IMR-90 (cell line): ENCODE measurements at regions of chr19 and their contacts with region 1.

Region 1: DNA sequence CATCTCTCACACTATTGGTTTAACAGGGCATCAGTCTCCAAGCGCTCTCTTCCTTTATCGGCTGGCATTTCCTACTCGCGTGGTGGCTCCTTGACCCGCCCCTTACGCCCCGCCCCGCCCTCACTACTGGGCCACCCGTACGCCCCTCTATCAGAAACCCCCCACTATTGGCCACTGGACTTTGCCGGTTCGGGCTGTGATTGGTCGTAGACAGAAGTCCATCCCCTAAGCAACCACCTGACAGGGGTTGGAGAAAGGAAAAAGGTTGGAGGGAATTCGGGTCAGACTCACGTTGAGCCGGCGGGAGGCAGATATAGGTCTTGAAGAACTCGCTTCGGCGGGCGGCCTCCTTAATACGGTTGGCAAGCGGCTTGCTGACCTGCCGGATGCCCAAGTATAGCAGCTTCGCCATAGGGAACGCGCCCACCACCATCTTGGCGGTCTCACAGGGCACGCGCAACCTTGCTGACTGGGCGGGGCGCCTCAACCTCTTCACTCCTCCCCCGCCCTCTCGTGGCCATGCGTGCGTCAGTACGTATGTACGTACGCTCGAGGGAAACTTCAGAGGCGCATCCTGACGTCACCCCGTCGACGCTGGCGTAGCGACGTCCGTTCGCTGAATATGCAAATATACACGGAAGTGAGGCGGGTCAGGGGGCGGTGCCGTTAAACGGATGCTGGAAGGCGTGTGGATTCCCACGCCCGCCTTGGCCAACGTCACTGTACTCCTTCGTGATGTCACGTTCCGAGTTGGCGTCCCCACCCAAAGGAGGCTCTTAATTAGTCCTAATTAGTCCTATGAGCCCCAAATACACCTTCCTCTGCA is at the start of gene OPA3:
- DNase-seq: peak; percentile 100
- ATAC-seq: peak; percentile 96
- H3K4me3 ChIP-seq: peak within 1 kb of the TSS; percentile 81
- H3K27ac ChIP-seq: peak within 1 kb of the TSS; percentile 92
- H3K4me1 ChIP-seq: 0 out of 2 replicates have a peak, but pooled peaks cover 1% of the 10 kb centered on the region
- H3K27me3 ChIP-seq: no peaks in the 10 kb centered on the region
- CTCF ChIP-seq: no peak
- POLR2A ChIP-seq: peak; percentile 97
- RAD21 ChIP-seq: no peak; the same call in 1 of the 2 replicates
- total RNA-seq, gene OPA3: 3.9 and 5.2 TPM in 2 replicates

Region 2: GRCh38 chr19:45595814-45596213 is 11.3 kb after region 1 on chr19:
- CTCF ChIA-PET with region 1: no interaction called
- POLR2A ChIA-PET with region 1: interaction called, 13 read pairs
- dilution Hi-C with region 1: no loop called
- in situ Hi-C with region 1: no loop called
- intact Hi-C with region 1: no loop called
- DNase-seq: peak; percentile 43
- ATAC-seq: no peak
- H3K4me3 ChIP-seq: no peak overlapping the region
- H3K27ac ChIP-seq: no peak overlapping the region
- H3K4me1 ChIP-seq: no peaks in the 10 kb centered on the region
- H3K27me3 ChIP-seq: peaks cover 42% of the 10 kb centered on the region
- CTCF ChIP-seq: no peak
- POLR2A ChIP-seq: no peak
- RAD21 ChIP-seq: no peak

Region 3: DNA sequence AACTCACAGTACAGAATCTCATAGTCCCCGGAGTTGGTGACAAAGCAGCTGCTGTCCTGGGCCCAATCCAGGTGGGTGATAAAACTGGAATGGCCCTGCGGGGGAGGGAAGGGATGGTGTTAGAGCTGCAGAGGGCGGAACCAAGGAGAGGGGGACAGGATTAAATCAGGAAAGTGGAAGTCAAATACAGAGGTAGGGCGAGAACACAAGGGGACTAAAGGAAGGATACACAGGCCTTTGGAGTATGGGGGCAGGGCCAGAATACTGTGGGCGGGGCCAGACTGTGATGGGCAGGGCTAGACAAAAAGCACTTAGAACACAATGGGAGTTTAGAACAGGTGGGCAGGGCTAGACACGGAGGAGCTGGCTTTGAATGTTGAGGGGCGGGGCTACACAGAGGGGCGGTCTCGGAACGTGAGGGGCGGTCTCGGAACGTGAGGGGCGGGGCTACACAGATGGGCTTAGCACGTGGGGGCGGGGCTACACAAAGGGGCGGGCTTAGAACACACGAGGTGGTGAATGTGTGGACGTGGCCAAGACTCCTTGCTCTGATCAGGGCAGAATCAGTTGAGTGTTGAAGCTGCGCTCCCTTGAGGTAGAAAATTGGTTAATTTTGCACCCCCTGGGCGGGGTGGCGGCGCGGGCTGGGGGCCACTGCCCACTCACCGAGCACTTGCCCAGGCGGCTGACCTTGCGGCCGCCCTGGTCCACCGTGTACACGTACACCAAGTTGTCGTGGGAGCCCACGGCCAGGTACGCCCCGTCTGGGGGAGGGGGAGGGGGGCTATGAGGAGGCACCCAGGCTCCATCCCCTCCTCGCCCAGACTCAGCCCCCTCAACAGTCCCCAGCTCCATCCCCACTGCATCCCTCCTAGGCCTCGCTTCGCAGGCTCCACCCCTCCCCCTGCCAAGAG is 31.5 kb after region 1 on chr19:
- CTCF ChIA-PET with region 1: no interaction called
- POLR2A ChIA-PET with region 1: no interaction called
- dilution Hi-C with region 1: no loop called
- in situ Hi-C with region 1: no loop called
- intact Hi-C with region 1: no loop called
- DNase-seq: peak; percentile 80
- ATAC-seq: peak; percentile 87
- H3K4me3 ChIP-seq: no peak overlapping the region
- H3K27ac ChIP-seq: no peak overlapping the region
- H3K4me1 ChIP-seq: peaks cover 8% of the 10 kb centered on the region
- H3K27me3 ChIP-seq: no peaks in the 10 kb centered on the region
- CTCF ChIP-seq: no peak
- POLR2A ChIP-seq: no peak
- RAD21 ChIP-seq: no peak

Region 4: DNA sequence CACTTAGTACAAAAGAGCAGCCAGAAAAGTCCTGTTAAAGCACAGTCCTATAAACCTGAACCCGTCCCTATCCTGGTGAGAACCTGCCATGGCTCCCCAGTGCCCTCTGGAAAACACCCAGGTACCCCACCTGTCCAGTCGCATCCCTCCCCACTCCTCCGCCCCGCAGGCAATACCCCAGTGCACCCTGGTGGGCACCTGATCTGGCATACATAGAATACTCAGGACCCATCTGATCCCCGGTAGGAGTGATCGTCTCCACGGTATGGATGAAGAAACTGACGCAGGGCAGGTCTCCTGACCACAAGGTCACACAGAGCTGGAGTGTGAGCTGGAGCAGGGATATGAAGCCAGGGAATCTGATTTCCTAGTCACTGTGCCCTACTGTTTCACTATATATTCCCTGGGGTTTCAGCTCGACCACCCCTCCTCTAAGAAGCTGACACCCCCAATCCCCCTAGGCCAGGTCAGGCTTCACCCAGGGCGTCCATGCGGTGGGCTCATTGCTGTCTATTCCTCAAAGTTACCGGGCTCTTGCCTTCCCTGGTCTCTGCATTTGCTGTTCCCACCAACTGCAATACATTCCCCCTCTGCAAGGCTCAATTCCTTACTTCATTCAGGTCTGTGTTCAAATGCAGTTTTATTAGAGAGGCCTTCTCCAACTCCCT is 133.6 kb after region 1 on chr19:
- CTCF ChIA-PET with region 1: no interaction called
- POLR2A ChIA-PET with region 1: no interaction called
- dilution Hi-C with region 1: no loop called
- in situ Hi-C with region 1: no loop called
- intact Hi-C with region 1: no loop called
- DNase-seq: no peak
- ATAC-seq: no peak
- H3K4me3 ChIP-seq: peak overlapping the region; percentile 41
- H3K27ac ChIP-seq: peak overlapping the region; percentile 93
- H3K4me1 ChIP-seq: peaks cover 9% of the 10 kb centered on the region
- H3K27me3 ChIP-seq: no peaks in the 10 kb centered on the region
- CTCF ChIP-seq: no peak
- POLR2A ChIP-seq: no peak
- RAD21 ChIP-seq: no peak

Region 5: DNA sequence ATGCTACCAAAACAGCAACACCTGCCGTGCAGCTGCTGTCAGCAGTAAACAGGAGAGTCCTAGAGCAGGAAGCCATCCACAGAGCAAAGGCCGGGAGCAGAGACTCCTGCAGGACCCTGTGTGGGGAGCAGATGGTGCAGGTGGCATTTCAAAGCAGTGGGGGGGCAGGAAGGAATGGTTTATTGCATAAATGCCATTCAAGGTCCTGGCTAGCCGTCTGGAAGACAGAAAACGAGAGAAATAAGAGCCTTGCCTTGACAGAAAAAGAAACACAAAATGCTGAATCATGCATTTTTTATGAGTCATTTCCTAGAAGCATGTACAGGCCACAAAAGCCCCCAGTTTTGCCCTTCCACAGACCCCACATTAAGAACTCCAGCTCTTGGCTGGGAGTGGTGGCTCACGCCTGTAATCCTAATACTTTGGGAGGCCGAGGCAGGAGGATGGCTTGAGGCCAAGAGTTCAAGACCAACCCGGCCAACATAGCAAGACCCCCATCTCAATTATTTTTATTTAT is 225.2 kb after region 1 on chr19:
- CTCF ChIA-PET with region 1: no interaction called
- POLR2A ChIA-PET with region 1: no interaction called
- dilution Hi-C with region 1: no loop called
- in situ Hi-C with region 1: no loop called
- intact Hi-C with region 1: no loop called
- DNase-seq: peak; percentile 83
- ATAC-seq: peak; percentile 71
- H3K4me3 ChIP-seq: no peak overlapping the region
- H3K27ac ChIP-seq: peak overlapping the region; percentile 79; the same call in 1 of the 2 replicates
- H3K4me1 ChIP-seq: peaks cover 10% of the 10 kb centered on the region
- H3K27me3 ChIP-seq: no peaks in the 10 kb centered on the region
- CTCF ChIP-seq: no peak
- POLR2A ChIP-seq: no peak
- RAD21 ChIP-seq: no peak